Activated CD4-positive, alpha-beta T cell treated with anti-CD3 and anti-CD28 coated beads, Interleukin-2, amount 10 ng/mL, durations not matched to agents 7 days and 5 days (primary cell): ENCODE measurements at regions of chr3 and their contacts with region 1.

Region 1: GRCh38 chr3:46078712-46079400 is 51.6 kb upstream of the XCR1 start:
- DNase-seq: peak; percentile 94
- H3K4me3 Mint-ChIP-seq: no peak overlapping the region
- H3K27ac Mint-ChIP-seq: no peak overlapping the region
- H3K4me1 Mint-ChIP-seq: peaks cover 23% of the 10 kb centered on the region
- H3K27me3 Mint-ChIP-seq: peaks cover 51% of the 10 kb centered on the region

Region 2: DNA sequence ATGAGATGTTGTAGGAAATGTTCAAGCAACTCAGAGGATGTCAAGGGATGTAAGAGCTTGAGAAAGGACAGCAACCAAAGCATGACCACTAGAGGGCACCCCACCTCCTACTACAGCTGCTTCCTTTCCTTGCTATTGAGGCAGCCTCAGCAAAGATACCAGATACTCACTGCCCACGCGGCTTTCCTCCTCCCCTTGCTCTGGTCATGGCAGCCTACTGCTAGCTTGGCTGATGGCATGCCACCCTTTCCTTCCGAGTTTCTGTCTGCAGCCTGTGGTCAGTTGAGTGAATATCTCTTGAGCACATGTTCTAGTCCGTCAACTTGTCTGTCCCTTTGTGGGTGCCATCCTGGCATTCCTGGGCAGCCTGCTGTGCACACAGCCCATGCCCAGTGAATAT is 140.0 kb before region 1 on chr3:
- CTCF ChIA-PET with region 1: interaction called, 120 read pairs
- POLR2A ChIA-PET with region 1: interaction called, 3 read pairs
- DNase-seq: peak; percentile 91
- H3K4me3 Mint-ChIP-seq: no peak overlapping the region
- H3K27ac Mint-ChIP-seq: no peak overlapping the region
- H3K4me1 Mint-ChIP-seq: peaks cover 40% of the 10 kb centered on the region
- H3K27me3 Mint-ChIP-seq: no peaks in the 10 kb centered on the region

Region 3: GRCh38 chr3:46049116-46049515 is 29.7 kb before region 1 on chr3:
- CTCF ChIA-PET with region 1: interaction called, 10 read pairs
- POLR2A ChIA-PET with region 1: no interaction called
- DNase-seq: no peak
- H3K4me3 Mint-ChIP-seq: no peak overlapping the region
- H3K27ac Mint-ChIP-seq: no peak overlapping the region
- H3K4me1 Mint-ChIP-seq: peaks cover 30% of the 10 kb centered on the region
- H3K27me3 Mint-ChIP-seq: peaks cover 23% of the 10 kb centered on the region

Region 4: GRCh38 chr3:46089237-46090011 is 10.6 kb after region 1 on chr3:
- CTCF ChIA-PET with region 1: interaction called, 26 read pairs
- POLR2A ChIA-PET with region 1: no interaction called
- DNase-seq: no peak
- H3K4me3 Mint-ChIP-seq: no peak overlapping the region
- H3K27ac Mint-ChIP-seq: no peak overlapping the region
- H3K4me1 Mint-ChIP-seq: peaks cover 39% of the 10 kb centered on the region
- H3K27me3 Mint-ChIP-seq: peaks cover 32% of the 10 kb centered on the region

Region 5: GRCh38 chr3:46208167-46208704 is 129.4 kb after region 1 on chr3 and contains the start of gene CCR1:
- CTCF ChIA-PET with region 1: interaction called, 24 read pairs
- POLR2A ChIA-PET with region 1: no interaction called
- DNase-seq: peak; percentile 54
- H3K4me3 Mint-ChIP-seq: peak within 1 kb of the TSS; percentile 63
- H3K27ac Mint-ChIP-seq: peak within 1 kb of the TSS; percentile 81
- H3K4me1 Mint-ChIP-seq: peaks cover 53% of the 10 kb centered on the region
- H3K27me3 Mint-ChIP-seq: no peaks in the 10 kb centered on the region
- total RNA-seq, gene CCR1: 6.4 to 6.6 TPM